ENCODE measurements at regions of chr4 and their contacts with region 1.

Region 1: GRCh38 chr4:153466081-153466948 is at the start of gene TMEM131L:
- DNase-seq: peak; percentile 58 to 92 (median 69)
- ATAC-seq: peak; percentile 77
- H3K4me3 ChIP-seq: peak within 1 kb of the TSS; percentile 77 to 94
- H3K4me3 Mint-ChIP-seq: peak within 1 kb of the TSS; percentile 95
- H3K27ac ChIP-seq: peak within 1 kb of the TSS; percentile 76 to 92
- H3K27ac Mint-ChIP-seq: peak within 1 kb of the TSS; percentile 96
- H3K4me1 ChIP-seq: peaks cover 40% of the 10 kb centered on the region
- H3K4me1 Mint-ChIP-seq: peaks cover 44% of the 10 kb centered on the region
- H3K27me3 ChIP-seq: no peaks in the 10 kb centered on the region
- H3K27me3 Mint-ChIP-seq: no peaks in the 10 kb centered on the region
- CTCF ChIP-seq: peak; percentile 35
- total RNA-seq, gene TMEM131L: 80.8 to 83.1 TPM

Region 2: DNA sequence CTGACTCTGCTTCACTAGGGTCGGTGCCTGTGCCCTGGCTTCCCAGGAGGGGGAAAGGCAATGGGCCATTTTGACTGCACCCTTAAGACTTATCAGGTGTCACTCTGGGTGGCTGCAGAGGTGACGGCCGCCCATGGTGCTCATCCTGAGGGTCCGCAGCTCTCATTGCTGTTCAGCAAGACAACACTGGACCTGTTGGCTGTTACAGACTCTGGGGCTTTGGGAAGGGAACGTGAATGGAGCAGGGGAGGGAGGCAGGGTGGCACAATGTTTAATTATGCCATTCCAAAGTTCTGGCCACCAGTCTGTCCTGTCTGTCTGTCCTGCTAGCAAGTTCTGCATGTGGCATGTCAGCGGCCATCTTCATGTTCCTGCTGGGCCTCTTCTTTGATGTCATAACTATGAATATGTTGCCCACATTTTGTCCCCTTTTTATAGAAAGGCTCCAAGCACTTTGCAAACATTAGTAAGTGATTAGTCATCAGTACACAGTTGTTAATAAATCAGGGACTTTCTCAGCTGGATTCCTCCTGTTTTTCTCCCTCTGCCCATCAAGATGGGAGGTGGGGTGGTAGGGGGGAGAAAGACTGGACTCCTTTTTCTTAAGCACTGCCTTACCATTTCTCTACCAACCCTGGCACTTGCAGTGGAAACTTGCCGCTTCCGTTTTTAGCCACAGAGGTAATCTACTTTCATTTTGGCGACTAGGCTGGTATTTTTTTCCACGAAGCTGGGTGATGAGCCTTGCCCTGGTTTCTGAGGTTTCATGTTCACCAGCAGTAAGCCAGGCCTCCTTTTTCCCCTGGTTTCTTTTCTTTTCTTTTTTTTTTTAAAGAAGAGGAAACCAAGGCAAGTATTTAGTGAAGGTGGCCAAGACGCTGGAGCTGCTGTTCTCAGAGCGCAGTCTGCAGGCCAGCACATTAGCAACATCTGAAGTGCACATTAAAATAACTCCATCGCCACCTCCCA is 350.7 kb before region 1 on chr4:
- CTCF ChIA-PET with region 1: no interaction called
- POLR2A ChIA-PET with region 1: no interaction called
- intact Hi-C with region 1: loop called in 1 of 2 experiments (anchors 10 kb)
- DNase-seq: peak; percentile 41 to 92 (median 76)
- ATAC-seq: peak; percentile 52
- H3K4me3 ChIP-seq: peak overlapping the region in 1 of 2 experiments; percentile 31
- H3K4me3 Mint-ChIP-seq: no peak overlapping the region
- H3K27ac ChIP-seq: peak overlapping the region; percentile 58 to 78
- H3K27ac Mint-ChIP-seq: no peak overlapping the region
- H3K4me1 ChIP-seq: peaks cover 64% of the 10 kb centered on the region
- H3K4me1 Mint-ChIP-seq: peaks cover 9% of the 10 kb centered on the region
- H3K27me3 ChIP-seq: no peaks in the 10 kb centered on the region
- H3K27me3 Mint-ChIP-seq: no peaks in the 10 kb centered on the region
- CTCF ChIP-seq: no peak

Region 3: GRCh38 chr4:153426207-153426885 is 40.0 kb before region 1 on chr4:
- CTCF ChIA-PET with region 1: interaction called, 11 read pairs
- POLR2A ChIA-PET with region 1: interaction called, 14 read pairs
- intact Hi-C with region 1: loop called (anchors 1 to 5 kb)
- DNase-seq: peak in 4 of 9 experiments; percentile 9 to 78 (median 40)
- ATAC-seq: peak; percentile 78
- H3K4me3 ChIP-seq: peak overlapping the region in 1 of 2 experiments; percentile 33
- H3K4me3 Mint-ChIP-seq: peak overlapping the region; percentile 40
- H3K27ac ChIP-seq: peak overlapping the region; percentile 55 to 77
- H3K27ac Mint-ChIP-seq: peak overlapping the region; percentile 83
- H3K4me1 ChIP-seq: peaks cover 44% of the 10 kb centered on the region
- H3K4me1 Mint-ChIP-seq: peaks cover 53% of the 10 kb centered on the region
- H3K27me3 ChIP-seq: no peaks in the 10 kb centered on the region
- H3K27me3 Mint-ChIP-seq: no peaks in the 10 kb centered on the region
- CTCF ChIP-seq: no peak

Region 4: GRCh38 chr4:153497988-153498967 is 32.0 kb after region 1 on chr4:
- CTCF ChIA-PET with region 1: interaction called, 6 read pairs
- POLR2A ChIA-PET with region 1: interaction called, 50 read pairs
- intact Hi-C with region 1: no loop called
- DNase-seq: peak in 2 of 9 experiments; percentile 27 to 62
- ATAC-seq: peak; percentile 15
- H3K4me3 ChIP-seq: peak overlapping the region in 1 of 2 experiments; percentile 37
- H3K4me3 Mint-ChIP-seq: peak overlapping the region; percentile 66
- H3K27ac ChIP-seq: peak overlapping the region; percentile 54 to 78
- H3K27ac Mint-ChIP-seq: peak overlapping the region; percentile 97
- H3K4me1 ChIP-seq: peaks cover 92% of the 10 kb centered on the region
- H3K4me1 Mint-ChIP-seq: peaks cover 90% of the 10 kb centered on the region
- H3K27me3 ChIP-seq: no peaks in the 10 kb centered on the region
- H3K27me3 Mint-ChIP-seq: no peaks in the 10 kb centered on the region
- CTCF ChIP-seq: no peak

Region 5: GRCh38 chr4:153521999-153522801 is 55.9 kb after region 1 on chr4:
- CTCF ChIA-PET with region 1: interaction called, 4 read pairs
- POLR2A ChIA-PET with region 1: interaction called, 18 read pairs
- intact Hi-C with region 1: loop called (anchors 1 to 2 kb)
- DNase-seq: peak in 8 of 9 experiments; percentile 37 to 90 (median 66)
- ATAC-seq: peak; percentile 54
- H3K4me3 ChIP-seq: peak overlapping the region; percentile 21 to 28
- H3K4me3 Mint-ChIP-seq: peak overlapping the region; percentile 77
- H3K27ac ChIP-seq: peak overlapping the region; percentile 22 to 75
- H3K27ac Mint-ChIP-seq: peak overlapping the region; percentile 94
- H3K4me1 ChIP-seq: peaks cover 87% of the 10 kb centered on the region
- H3K4me1 Mint-ChIP-seq: peaks cover 91% of the 10 kb centered on the region
- H3K27me3 ChIP-seq: no peaks in the 10 kb centered on the region
- H3K27me3 Mint-ChIP-seq: no peaks in the 10 kb centered on the region
- CTCF ChIP-seq: no peak

Measured in CD8-positive, alpha-beta T cell (primary cell).